Activated CD8-positive, alpha-beta T cell treated with anti-CD3 and anti-CD28 coated beads for 36 hours (primary cell): ENCODE measurements at regions of chr1 and their contacts with region 1.

Region 1: DNA sequence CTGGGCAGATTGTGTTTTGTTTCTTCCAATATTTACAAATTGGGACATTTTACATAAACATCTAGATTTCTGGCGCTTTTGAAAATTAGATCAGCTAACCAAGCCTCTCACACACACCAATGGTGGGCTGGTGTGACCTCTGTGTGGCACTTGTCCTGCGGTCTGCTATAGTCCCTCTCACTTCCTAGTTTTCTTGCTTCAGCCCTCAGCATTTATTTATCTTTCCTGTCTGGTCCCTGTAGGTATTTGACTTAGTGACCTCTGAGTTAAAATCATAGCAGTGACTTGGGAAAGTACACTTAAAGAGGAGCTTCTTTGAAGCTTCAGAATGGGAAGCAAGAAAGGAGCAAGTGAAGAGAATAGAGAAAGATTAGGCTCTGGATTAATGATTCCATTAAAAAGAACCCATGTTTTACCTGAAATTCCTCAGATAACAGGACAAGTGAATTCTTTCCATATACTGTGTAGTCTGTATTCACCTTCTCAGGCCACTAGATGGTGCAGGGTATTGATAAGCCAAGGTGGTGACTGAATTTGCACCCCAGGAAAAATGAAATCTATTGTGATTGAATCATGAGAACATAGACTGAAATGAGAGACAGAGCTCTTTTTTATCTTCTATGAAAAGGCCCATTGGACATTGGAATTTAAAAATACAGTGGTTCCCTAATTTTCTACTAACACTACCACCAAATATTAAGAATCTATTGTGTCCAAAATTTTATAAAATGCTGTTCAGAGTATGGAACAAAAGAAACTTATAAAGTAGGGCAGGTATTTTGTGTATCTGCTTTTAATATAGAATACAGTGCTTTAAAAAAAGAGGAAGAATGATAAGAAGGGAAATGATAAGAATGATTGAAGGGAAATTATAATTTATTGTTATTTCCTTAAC is 7.1 kb upstream of the DIPK1A start:
- DNase-seq: no peak
- ATAC-seq: peak; percentile 64
- H3K4me3 Mint-ChIP-seq: no peak overlapping the region
- H3K27ac Mint-ChIP-seq: peak overlapping the region; percentile 36
- H3K4me1 Mint-ChIP-seq: peaks cover 36% of the 10 kb centered on the region
- H3K27me3 Mint-ChIP-seq: no peaks in the 10 kb centered on the region
- CTCF ChIP-seq: peak; percentile 84

Region 2: GRCh38 chr1:92728697-92729096 is 239.7 kb before region 1 on chr1:
- CTCF ChIA-PET with region 1: no interaction called
- POLR2A ChIA-PET with region 1: no interaction called
- intact Hi-C with region 1: no loop called
- DNase-seq: no peak
- ATAC-seq: no peak
- H3K4me3 Mint-ChIP-seq: no peak overlapping the region
- H3K27ac Mint-ChIP-seq: no peak overlapping the region
- H3K4me1 Mint-ChIP-seq: no peaks in the 10 kb centered on the region
- H3K27me3 Mint-ChIP-seq: no peaks in the 10 kb centered on the region
- CTCF ChIP-seq: no peak

Region 3: GRCh38 chr1:92980732-92981647 is 12.6 kb after region 1 on chr1:
- CTCF ChIA-PET with region 1: interaction called, 91 read pairs
- POLR2A ChIA-PET with region 1: interaction called, 49 read pairs
- intact Hi-C with region 1: loop called (anchors 1 kb)
- DNase-seq: peak; percentile 69
- ATAC-seq: peak; percentile 66
- H3K4me3 Mint-ChIP-seq: peak overlapping the region; percentile 68
- H3K27ac Mint-ChIP-seq: peak overlapping the region; percentile 95
- H3K4me1 Mint-ChIP-seq: peaks cover 72% of the 10 kb centered on the region
- H3K27me3 Mint-ChIP-seq: no peaks in the 10 kb centered on the region
- CTCF ChIP-seq: no peak

Region 4: DNA sequence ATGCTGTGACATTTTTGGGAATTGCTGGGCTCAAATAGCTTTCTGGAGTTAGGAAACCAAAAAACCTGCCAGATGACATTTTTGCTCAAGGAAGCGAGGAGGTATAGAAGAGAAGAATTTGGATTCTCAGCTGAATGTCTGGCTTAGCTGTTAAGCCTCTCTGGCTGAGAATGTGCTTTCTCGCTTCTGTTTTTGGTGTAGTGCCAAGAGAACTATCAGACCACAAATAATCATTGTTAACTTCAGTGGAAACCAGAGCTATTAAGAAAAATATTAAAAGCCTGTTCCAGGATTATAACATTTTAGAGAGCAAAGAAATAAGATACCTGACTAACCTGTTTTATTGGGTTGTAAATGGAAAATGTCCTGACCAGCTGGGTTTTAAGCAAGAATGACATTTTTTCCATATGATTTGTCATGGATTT is 32.4 kb after region 1 on chr1:
- CTCF ChIA-PET with region 1: interaction called, 27 read pairs
- POLR2A ChIA-PET with region 1: no interaction called
- intact Hi-C with region 1: no loop called
- DNase-seq: no peak
- ATAC-seq: no peak
- H3K4me3 Mint-ChIP-seq: no peak overlapping the region
- H3K27ac Mint-ChIP-seq: no peak overlapping the region
- H3K4me1 Mint-ChIP-seq: no peaks in the 10 kb centered on the region
- H3K27me3 Mint-ChIP-seq: peaks cover 2% of the 10 kb centered on the region
- CTCF ChIP-seq: no peak